Activated CD4-positive, alpha-beta T cell treated with anti-CD3 and anti-CD28 coated beads, Interleukin-2, amount 10 ng/mL, durations not matched to agents 24 days and 14 days (primary cell): ENCODE measurements at regions of chr5 and their contacts with region 1.

Region 1: DNA sequence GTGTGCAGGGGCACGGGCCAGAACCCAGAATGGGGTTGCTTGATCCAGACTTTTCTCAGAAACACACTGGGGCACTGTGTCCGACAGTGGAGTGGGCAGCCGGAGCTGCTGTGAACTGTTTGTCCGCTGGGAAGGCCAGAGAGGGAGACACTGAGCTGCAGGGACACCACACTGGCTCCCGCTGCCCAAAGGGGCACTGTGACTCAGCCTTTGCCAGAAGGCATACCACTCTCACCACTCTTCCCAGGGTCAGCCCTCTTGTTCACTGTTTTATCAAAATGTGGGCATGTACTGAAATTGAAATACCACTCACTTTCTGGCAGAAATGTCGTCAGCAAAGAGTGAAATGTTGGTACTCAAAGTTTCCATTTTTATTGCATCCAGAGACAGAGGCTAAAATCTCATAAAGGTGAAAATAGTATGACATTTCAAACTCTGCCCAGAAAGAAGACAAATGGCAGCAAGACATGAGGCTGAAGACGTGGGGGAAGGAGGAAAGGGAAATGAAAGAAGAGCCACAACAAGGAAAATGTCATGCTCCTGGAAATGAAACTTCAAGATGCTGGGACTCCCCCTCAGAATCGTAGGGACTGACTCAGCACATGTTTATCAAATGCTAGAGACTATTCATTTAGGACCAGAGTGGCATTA is 4.5 kb upstream of the IL7R start:
- DNase-seq: peak; percentile 86
- H3K4me3 Mint-ChIP-seq: peak overlapping the region; percentile 87
- H3K27ac Mint-ChIP-seq: peak overlapping the region; percentile 99
- H3K4me1 Mint-ChIP-seq: peaks cover 59% of the 10 kb centered on the region
- H3K27me3 Mint-ChIP-seq: no peaks in the 10 kb centered on the region

Region 2: GRCh38 chr5:35617435-35618303 is 234.5 kb before region 1 on chr5 and contains the start of gene SPEF2:
- intact Hi-C with region 1: loop called (anchors 2 kb)
- DNase-seq: peak; percentile 93
- H3K4me3 Mint-ChIP-seq: peak within 1 kb of the TSS; percentile 87
- H3K27ac Mint-ChIP-seq: peak within 1 kb of the TSS; percentile 89
- H3K4me1 Mint-ChIP-seq: peaks cover 23% of the 10 kb centered on the region
- H3K27me3 Mint-ChIP-seq: no peaks in the 10 kb centered on the region
- total RNA-seq, gene SPEF2: 5.5 and 5.8 TPM in 2 replicates

Region 3: GRCh38 chr5:35736280-35736679 is 115.9 kb before region 1 on chr5:
- intact Hi-C with region 1: loop called (anchors 2 kb)
- DNase-seq: peak; percentile 54
- H3K4me3 Mint-ChIP-seq: no peak overlapping the region
- H3K27ac Mint-ChIP-seq: peak overlapping the region; percentile 41
- H3K4me1 Mint-ChIP-seq: peaks cover 20% of the 10 kb centered on the region
- H3K27me3 Mint-ChIP-seq: no peaks in the 10 kb centered on the region

Region 4: GRCh38 chr5:35785601-35786085 is 66.6 kb before region 1 on chr5:
- intact Hi-C with region 1: loop called (anchors 1 kb)
- DNase-seq: peak; percentile 81
- H3K4me3 Mint-ChIP-seq: peak overlapping the region; percentile 46
- H3K27ac Mint-ChIP-seq: peak overlapping the region; percentile 84
- H3K4me1 Mint-ChIP-seq: peaks cover 66% of the 10 kb centered on the region
- H3K27me3 Mint-ChIP-seq: no peaks in the 10 kb centered on the region

Region 5: DNA sequence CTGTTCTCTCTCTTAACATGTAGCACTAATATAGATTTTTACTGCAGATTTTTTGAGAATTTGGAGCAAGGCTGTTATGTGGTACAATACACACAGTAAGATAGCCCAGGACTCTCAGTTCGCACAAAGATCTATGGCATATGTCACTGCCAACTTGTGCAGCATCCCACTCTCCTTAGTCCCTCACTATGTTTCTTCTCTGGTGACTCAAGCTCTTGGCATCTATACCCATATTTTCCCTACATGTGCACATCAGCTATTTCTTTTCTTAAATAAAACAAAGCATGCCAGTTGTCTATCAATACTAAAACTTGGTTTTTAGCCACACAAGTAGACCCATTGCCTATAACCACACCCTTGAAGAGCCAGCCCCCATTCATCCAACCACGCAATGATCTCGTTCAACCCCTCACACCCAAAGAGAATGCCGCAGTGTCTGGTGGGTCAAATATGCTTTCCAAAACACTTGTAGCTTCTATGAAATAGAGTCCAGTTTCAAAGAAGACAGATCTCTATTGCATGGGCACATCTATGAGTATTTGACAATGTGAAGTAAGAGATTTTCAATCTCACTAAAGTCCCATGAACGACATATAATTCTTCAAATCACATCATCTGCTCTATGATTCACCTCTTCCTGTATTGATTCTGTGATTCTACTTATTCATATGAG is 13.7 kb before region 1 on chr5:
- intact Hi-C with region 1: loop called (anchors 1 kb)
- DNase-seq: peak; percentile 58
- H3K4me3 Mint-ChIP-seq: peak overlapping the region; percentile 39
- H3K27ac Mint-ChIP-seq: peak overlapping the region; percentile 88
- H3K4me1 Mint-ChIP-seq: peaks cover 53% of the 10 kb centered on the region
- H3K27me3 Mint-ChIP-seq: no peaks in the 10 kb centered on the region

Region 6: GRCh38 chr5:36151434-36152323 is 299.5 kb after region 1 on chr5 and contains the starts of genes LMBRD2 and SKP2:
- intact Hi-C with region 1: loop called (anchors 5 kb)
- DNase-seq: peak; percentile 99
- H3K4me3 Mint-ChIP-seq: peak within 1 kb of the TSS; percentile 85
- H3K27ac Mint-ChIP-seq: peak within 1 kb of the TSS; percentile 90
- H3K4me1 Mint-ChIP-seq: peaks cover 36% of the 10 kb centered on the region
- H3K27me3 Mint-ChIP-seq: no peaks in the 10 kb centered on the region
- total RNA-seq, gene LMBRD2: 9.8 TPM in 2 replicates
- total RNA-seq, gene SKP2: 63.0 and 69.8 TPM in 2 replicates